Dorsolateral prefrontal cortex (tissue), 120 donors: ENCODE measurements at regions of chr1 and their contacts with region 1.

Region 1: GRCh38 chr1:248807067-248807737 is 18.5 kb downstream of the SH3BP5L start:
- DNase-seq: peak; percentile 27 to 79 (median 61)
- H3K4me3 ChIP-seq: peak overlapping the region in 34 of 59 donors; percentile 8 to 51 (median 30)
- H3K27ac ChIP-seq: no peak overlapping the region
- H3K27me3 ChIP-seq: no peaks in the 10 kb centered on the region
- CTCF ChIP-seq: peak in 55 of 56 donors; percentile 36 to 93 (median 85)

Region 2: DNA sequence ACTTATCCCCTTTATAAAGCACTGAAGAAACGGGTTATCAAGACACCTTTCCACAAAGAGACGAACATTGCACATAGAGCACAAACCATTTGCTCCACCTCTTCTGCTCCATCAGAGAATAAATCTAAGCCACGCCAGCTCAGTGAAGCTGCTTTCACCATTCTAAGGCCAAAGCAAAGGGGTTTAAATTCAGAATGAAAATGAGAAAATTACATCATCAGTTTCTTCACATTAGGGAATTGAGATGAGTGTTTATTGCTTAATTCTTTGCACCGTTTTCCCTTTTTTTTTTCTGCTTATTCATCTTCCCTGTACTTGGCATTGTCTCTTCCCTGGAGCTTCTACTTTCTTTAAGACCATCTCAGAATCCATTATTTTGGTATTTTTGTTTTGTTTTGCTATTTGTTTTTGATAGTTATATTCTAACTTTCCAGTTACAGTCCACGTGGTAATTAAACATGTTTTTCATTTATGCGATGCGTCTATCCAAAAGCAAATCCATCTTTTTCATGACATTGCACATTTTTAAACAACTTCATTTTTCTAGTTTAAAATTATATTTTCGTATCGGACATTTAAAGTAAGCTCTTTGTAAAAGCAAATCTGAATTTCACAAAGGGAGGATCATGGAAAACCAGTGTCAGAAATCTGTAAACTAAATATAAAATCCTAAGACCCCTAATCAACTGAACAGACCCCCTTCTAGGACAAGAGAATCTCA is 230.8 kb before region 1 on chr1:
- intact Hi-C with region 1: no loop called
- DNase-seq: no peak
- H3K4me3 ChIP-seq: no peak overlapping the region
- H3K27ac ChIP-seq: no peak overlapping the region
- H3K27me3 ChIP-seq: no peaks in the 10 kb centered on the region
- CTCF ChIP-seq: no peak

Region 3: DNA sequence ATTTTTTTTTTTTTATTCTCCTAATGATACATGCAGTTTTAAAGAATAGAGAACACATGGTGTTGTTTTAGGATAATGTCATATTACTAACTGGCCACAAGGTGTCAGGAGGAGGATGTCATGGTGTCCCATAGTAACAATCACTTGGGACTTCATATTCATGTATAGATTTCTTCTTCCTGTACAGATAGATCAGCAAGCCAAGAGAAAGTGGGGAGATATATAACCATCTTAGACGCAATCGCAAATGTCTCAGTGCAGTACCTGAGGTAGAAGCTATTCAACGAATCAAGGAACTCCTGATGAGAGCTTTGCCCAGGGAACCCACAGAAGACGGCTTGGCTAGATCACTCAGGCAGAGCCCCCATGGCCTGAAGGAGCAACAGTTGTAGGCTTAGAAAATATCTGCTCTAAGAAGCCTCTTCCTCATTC is 184.6 kb before region 1 on chr1:
- intact Hi-C with region 1: loop called in 1 of 2 experiments (anchors 2 kb)
- DNase-seq: no peak
- H3K4me3 ChIP-seq: no peak overlapping the region
- H3K27ac ChIP-seq: no peak overlapping the region
- H3K27me3 ChIP-seq: no peaks in the 10 kb centered on the region
- CTCF ChIP-seq: peak in 53 of 56 donors; percentile 28 to 70 (median 55)

Region 4: GRCh38 chr1:248670003-248670402 is 137.2 kb before region 1 on chr1:
- intact Hi-C with region 1: no loop called
- DNase-seq: no peak
- H3K4me3 ChIP-seq: no peak overlapping the region
- H3K27ac ChIP-seq: no peak overlapping the region
- H3K27me3 ChIP-seq: no peaks in the 10 kb centered on the region
- CTCF ChIP-seq: no peak

Region 5: DNA sequence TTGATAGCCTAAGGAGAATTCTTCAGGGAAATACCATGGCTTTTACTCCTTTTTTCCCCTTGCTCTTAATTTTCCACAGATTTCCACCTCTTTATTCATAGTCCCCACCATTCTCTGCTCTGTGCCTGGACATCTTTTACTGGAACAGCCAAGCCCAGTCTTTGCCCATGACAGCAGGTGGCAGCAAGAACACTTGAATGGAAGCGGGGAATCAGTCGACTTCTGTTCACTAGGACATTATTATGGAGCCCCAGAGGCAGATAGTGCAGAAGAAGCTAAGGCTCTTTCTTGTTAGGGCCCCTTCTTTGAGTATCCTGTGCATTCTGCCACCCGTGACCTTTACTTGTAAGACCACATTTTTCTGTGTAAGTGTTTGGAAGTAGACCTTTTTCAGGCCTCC is 110.9 kb before region 1 on chr1:
- intact Hi-C with region 1: no loop called
- DNase-seq: no peak
- H3K4me3 ChIP-seq: no peak overlapping the region
- H3K27ac ChIP-seq: no peak overlapping the region
- H3K27me3 ChIP-seq: no peaks in the 10 kb centered on the region
- CTCF ChIP-seq: peak in 13 of 56 donors; percentile 6 to 44 (median 20)

Region 6: DNA sequence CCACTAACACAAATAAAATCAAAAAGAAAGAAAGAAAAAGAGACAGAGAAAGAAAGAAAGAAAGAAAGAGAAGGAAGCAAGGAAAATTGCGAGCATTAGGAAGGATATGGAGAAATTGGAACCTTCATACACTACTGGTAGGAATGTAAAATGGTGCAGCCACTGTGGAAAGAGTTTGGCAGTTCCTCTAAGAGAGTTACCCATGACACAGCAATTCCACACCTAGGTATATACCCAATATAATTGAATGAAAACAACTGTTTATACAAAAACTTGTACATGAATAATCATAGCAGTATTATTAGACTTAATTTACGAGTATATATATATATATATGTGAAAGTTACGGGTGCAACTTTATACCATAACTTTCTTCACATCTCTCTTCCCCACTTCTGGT is 47.6 kb before region 1 on chr1:
- intact Hi-C with region 1: no loop called
- DNase-seq: no peak
- H3K4me3 ChIP-seq: no peak overlapping the region
- H3K27ac ChIP-seq: no peak overlapping the region
- H3K27me3 ChIP-seq: peaks cover 0 to 4% (median 0%) of the 10 kb centered on the region in 45 donors
- CTCF ChIP-seq: no peak